Kidney (tissue), 22 donors: ENCODE measurements at regions of chr5 and their contacts with region 1.

Region 1: DNA sequence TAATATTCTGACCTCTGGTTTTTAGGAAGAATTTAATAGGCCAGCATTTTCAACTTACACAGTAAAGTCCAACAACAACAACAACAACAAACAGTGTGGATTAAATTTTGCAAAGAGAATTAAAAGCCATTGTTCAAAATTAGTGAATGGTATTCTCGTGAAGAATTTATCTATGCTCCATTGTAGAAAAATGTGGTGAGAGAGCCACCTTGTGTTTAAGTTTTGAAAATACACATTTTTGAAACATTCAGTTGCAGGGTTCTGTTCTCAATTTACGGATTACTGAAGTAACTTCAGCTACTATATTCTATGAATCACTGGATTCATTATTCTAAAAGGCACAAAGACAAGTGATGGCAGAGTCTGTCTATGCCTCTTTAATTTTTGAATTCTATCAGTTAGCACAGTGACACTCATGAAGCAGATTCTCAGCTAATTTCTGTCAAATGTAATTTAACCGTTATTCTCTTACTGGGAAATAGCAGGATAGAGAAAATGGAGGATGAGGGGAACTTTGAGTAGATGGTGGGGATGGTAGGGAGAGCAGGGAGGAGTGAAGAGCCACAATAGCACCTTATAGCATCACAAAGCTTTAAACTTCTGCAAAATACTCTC is 11.0 kb downstream of the CCDC152 start:
- DNase-seq: peak in 2 of 5 donors; percentile 39 to 47
- H3K4me3 ChIP-seq: no peak overlapping the region
- H3K27ac ChIP-seq: no peak overlapping the region
- H3K4me1 ChIP-seq: no peaks in the 10 kb centered on the region
- H3K27me3 ChIP-seq: no peaks in the 10 kb centered on the region
- CTCF ChIP-seq: peak; percentile 45

Region 2: DNA sequence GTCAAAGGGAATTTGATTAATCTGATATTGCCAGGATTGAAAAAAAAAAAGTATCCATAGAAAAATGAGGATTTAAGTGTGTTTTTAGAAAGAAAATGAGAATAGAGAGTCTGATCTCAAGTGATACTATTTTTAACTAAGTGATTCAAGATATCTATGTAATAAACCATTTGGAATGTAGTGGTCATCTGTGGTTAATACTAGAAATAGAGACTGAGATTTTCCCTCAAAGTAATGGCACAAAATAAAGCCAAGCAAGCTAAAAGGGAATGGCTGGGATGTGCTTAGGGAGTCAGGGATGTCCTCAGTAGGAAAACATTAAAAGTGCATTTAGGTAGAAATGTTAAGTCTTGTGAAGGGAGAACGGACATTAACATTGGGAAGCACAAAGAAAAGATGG is 751.9 kb before region 1 on chr5:
- intact Hi-C with region 1: loop called (anchors 10 kb)
- DNase-seq: no peak
- H3K4me3 ChIP-seq: no peak overlapping the region
- H3K27ac ChIP-seq: no peak overlapping the region
- H3K4me1 ChIP-seq: no peaks in the 10 kb centered on the region
- H3K27me3 ChIP-seq: no peaks in the 10 kb centered on the region
- CTCF ChIP-seq: no peak